ENCODE measurements at regions of chr5 and their contacts with region 1.

Region 1: DNA sequence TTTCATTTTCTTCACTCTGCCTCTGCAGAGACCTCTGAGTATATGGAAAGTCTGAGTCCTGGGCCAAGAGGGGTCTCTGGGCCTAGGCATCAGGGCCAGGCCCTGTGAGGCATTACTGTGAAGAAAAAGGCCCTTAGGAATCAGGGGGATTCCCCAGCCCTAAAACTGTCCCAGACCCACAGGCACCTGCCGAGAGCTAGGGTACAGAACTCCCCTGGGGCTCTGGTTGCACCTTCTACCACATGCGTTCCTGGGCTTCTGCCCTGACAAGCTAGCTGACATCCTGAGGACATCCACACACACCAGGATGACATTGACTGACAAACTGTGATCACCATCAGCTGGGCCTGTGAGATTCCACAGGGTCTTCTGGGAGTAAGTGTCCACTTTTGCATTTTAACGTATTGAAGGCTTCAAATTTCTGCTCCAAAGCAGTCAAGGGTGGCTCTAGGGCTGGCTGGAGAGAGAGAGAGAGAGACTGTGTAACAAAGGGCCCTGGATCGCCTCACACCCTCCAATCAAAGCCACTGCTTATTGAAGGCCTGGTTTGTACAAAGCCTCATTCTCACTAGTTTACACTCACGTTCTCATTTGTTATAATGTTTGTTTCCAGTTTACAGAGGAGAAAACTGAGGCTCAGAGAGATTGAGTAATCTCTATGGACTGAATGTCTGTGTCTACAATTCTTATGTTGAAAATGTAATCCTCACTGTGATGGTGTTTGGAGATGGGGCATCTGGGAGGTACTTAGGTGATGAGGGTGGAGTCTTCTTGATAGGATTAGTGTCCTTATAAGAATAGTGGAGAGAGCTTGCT is 45.1 kb downstream of the TGFBI start:
- DNase-seq: no peak
- H3K4me3 ChIP-seq: no peak overlapping the region
- H3K27ac ChIP-seq: no peak overlapping the region
- H3K4me1 ChIP-seq: peaks cover 0 to 12% (median 7%) of the 10 kb centered on the region in 3 donors
- H3K27me3 ChIP-seq: peaks cover 0 to 8% (median 0%) of the 10 kb centered on the region in 4 donors
- CTCF ChIP-seq: no peak
- POLR2A ChIP-seq: no peak

Region 2: GRCh38 chr5:136108180-136108611 is 34.3 kb after region 1 on chr5:
- intact Hi-C with region 1: no loop called
- DNase-seq: no peak
- H3K4me3 ChIP-seq: no peak overlapping the region
- H3K27ac ChIP-seq: peak overlapping the region in 2 of 4 donors; percentile 3 to 42
- H3K4me1 ChIP-seq: peaks cover 0 to 42% (median 15%) of the 10 kb centered on the region in 3 donors
- H3K27me3 ChIP-seq: no peaks in the 10 kb centered on the region
- CTCF ChIP-seq: peak in 2 of 6 experiments; percentile 33 to 44
- POLR2A ChIP-seq: no peak

Region 3: GRCh38 chr5:136166909-136167308 is 93.0 kb after region 1 on chr5:
- intact Hi-C with region 1: loop called (anchors 10 kb)
- DNase-seq: no peak
- H3K4me3 ChIP-seq: no peak overlapping the region
- H3K27ac ChIP-seq: no peak overlapping the region
- H3K4me1 ChIP-seq: no peaks in the 10 kb centered on the region
- H3K27me3 ChIP-seq: no peaks in the 10 kb centered on the region
- CTCF ChIP-seq: no peak
- POLR2A ChIP-seq: no peak

Measured in esophagus squamous epithelium (tissue), 5 donors.